ENCODE measurements at regions of chr20 and their contacts with region 1.

Region 1: GRCh38 chr20:50385733-50386640 is 124.2 kb upstream of the PTPN1 start:
- DNase-seq: peak; percentile 37 to 94 (median 66)
- ATAC-seq: peak; percentile 87
- H3K4me3 ChIP-seq: peak overlapping the region in 1 of 2 experiments; percentile 17
- H3K4me3 Mint-ChIP-seq: peak overlapping the region; percentile 43
- H3K27ac ChIP-seq: peak overlapping the region in 1 of 2 experiments; percentile 61
- H3K27ac Mint-ChIP-seq: peak overlapping the region; percentile 64
- H3K4me1 ChIP-seq: peaks cover 41% of the 10 kb centered on the region
- H3K4me1 Mint-ChIP-seq: peaks cover 63% of the 10 kb centered on the region
- H3K27me3 ChIP-seq: no peaks in the 10 kb centered on the region
- H3K27me3 Mint-ChIP-seq: peaks cover 4% of the 10 kb centered on the region
- CTCF ChIP-seq: no peak

Region 2: GRCh38 chr20:50338479-50339391 is 47.3 kb before region 1 on chr20:
- CTCF ChIA-PET with region 1: no interaction called
- POLR2A ChIA-PET with region 1: no interaction called
- intact Hi-C with region 1: loop called in 1 of 2 experiments (anchors 5 kb)
- DNase-seq: peak in 6 of 9 experiments; percentile 7 to 70 (median 30)
- ATAC-seq: peak; percentile 59
- H3K4me3 ChIP-seq: peak overlapping the region in 1 of 2 experiments; percentile 13
- H3K4me3 Mint-ChIP-seq: peak overlapping the region; percentile 61
- H3K27ac ChIP-seq: peak overlapping the region in 1 of 2 experiments; percentile 63
- H3K27ac Mint-ChIP-seq: peak overlapping the region; percentile 80
- H3K4me1 ChIP-seq: peaks cover 24% of the 10 kb centered on the region
- H3K4me1 Mint-ChIP-seq: peaks cover 25% of the 10 kb centered on the region
- H3K27me3 ChIP-seq: no peaks in the 10 kb centered on the region
- H3K27me3 Mint-ChIP-seq: no peaks in the 10 kb centered on the region
- CTCF ChIP-seq: no peak

Region 3: GRCh38 chr20:50366270-50367103 is 19.5 kb before region 1 on chr20:
- CTCF ChIA-PET with region 1: no interaction called
- POLR2A ChIA-PET with region 1: no interaction called
- intact Hi-C with region 1: no loop called
- DNase-seq: peak in 4 of 9 experiments; percentile 24 to 64 (median 37)
- ATAC-seq: no peak
- H3K4me3 ChIP-seq: no peak overlapping the region
- H3K4me3 Mint-ChIP-seq: no peak overlapping the region
- H3K27ac ChIP-seq: no peak overlapping the region
- H3K27ac Mint-ChIP-seq: no peak overlapping the region
- H3K4me1 ChIP-seq: no peaks in the 10 kb centered on the region
- H3K4me1 Mint-ChIP-seq: peaks cover 6% of the 10 kb centered on the region
- H3K27me3 ChIP-seq: no peaks in the 10 kb centered on the region
- H3K27me3 Mint-ChIP-seq: peaks cover 6% of the 10 kb centered on the region
- CTCF ChIP-seq: no peak